Activated CD4-positive, alpha-beta T cell treated with anti-CD3 and anti-CD28 coated beads, Interleukin-2, amount 10 ng/mL, durations not matched to agents 24 days and 14 days (primary cell): ENCODE measurements at regions of chr18 and their contacts with region 1.

Region 1: GRCh38 chr18:54224379-54225014 is at the start of gene MBD2:
- DNase-seq: peak; percentile 99
- H3K4me3 Mint-ChIP-seq: peak within 1 kb of the TSS; percentile 92
- H3K27ac Mint-ChIP-seq: peak within 1 kb of the TSS; percentile 98
- H3K4me1 Mint-ChIP-seq: peaks cover 34% of the 10 kb centered on the region
- H3K27me3 Mint-ChIP-seq: no peaks in the 10 kb centered on the region
- total RNA-seq, gene MBD2: 195 and 200 TPM in 2 replicates

Region 2: GRCh38 chr18:54163453-54163852 is 61.0 kb before region 1 on chr18:
- intact Hi-C with region 1: loop called (anchors 1 kb)
- DNase-seq: peak; percentile 49
- H3K4me3 Mint-ChIP-seq: no peak overlapping the region
- H3K27ac Mint-ChIP-seq: peak overlapping the region; percentile 86
- H3K4me1 Mint-ChIP-seq: peaks cover 22% of the 10 kb centered on the region
- H3K27me3 Mint-ChIP-seq: no peaks in the 10 kb centered on the region

Region 3: DNA sequence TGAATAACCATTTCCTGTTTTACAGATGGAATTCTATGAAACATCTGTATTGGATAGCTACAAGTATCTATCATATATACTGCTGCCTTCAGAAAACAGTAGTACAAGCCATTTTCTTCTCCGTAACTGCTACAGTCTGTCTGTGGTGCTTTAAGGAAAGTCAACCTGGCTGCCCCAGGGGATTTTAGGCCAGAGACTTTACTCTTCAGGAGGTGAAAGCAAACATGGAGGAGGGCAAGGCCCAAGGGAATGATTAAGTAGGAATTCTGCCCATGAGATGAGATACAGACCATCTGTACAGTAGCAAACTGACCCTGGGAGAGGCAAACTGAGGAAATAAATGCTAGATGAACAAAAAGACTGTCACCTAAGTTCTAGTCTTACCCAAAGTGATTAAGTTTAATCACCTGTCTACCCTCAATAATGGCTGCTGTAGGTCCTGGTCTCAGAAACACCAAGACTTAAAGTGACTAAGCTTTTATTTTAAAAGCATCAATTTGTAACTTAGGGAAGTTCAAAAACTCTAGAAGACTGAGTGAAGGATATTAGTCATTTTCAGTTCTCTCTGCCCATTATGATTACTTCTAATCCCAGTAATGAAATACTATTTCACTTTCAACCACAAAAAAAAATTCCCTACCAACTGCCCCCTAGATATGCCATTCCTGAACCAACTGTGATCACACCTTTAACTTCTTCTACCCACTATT is 14.9 kb before region 1 on chr18:
- intact Hi-C with region 1: loop called (anchors 1 kb)
- DNase-seq: no peak
- H3K4me3 Mint-ChIP-seq: peak overlapping the region; percentile 49
- H3K27ac Mint-ChIP-seq: peak overlapping the region; percentile 79
- H3K4me1 Mint-ChIP-seq: peaks cover 50% of the 10 kb centered on the region
- H3K27me3 Mint-ChIP-seq: no peaks in the 10 kb centered on the region

Region 4: DNA sequence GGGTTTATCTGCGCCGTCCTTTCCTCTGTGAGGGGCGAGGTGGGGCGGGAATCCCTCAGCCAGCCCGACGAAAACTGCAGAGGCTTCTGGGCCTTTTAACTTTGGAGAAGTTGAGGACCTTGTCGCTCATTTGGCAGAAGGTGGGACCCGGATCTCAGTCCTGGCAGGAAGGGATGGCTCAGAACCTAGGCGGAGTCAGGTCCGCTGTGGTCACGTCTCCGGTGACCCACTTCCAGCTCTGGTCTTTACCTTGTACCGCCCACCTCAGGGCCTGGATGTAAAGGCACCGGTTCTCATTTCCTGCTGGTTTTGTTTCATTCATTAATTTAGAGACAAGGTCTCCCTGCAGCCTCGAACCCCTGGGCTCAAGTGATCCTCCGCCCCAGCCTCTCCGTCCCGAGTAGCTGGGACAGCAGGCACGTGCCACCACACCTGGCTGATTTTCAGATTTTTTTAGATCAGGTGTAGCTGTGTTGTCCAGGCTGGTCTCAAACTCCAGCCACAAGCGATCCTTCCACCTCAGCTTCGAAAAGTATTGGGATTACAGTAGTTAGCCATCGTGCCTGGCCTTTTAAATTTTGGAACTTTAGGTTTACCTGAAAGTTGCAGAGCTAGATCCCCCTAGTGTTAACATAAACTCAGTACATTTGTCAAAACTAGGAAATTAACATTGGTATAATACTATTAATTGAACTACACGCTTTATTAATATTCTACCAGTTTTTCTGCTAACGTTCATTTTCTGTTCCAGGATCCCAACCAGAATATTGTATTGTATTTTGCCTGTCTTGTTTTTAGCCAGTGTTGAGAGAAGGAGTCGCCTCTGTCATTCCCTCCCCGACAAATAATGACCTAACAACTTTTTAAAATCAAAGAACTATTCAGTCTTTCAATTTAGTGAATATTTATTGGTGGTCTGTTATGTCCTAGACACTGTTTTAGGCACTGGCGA is 45.7 kb after region 1 on chr18:
- intact Hi-C with region 1: loop called (anchors 1 kb)
- DNase-seq: peak; percentile 89
- H3K4me3 Mint-ChIP-seq: peak overlapping the region; percentile 85
- H3K27ac Mint-ChIP-seq: peak overlapping the region; percentile 95
- H3K4me1 Mint-ChIP-seq: peaks cover 40% of the 10 kb centered on the region
- H3K27me3 Mint-ChIP-seq: peaks cover 2% of the 10 kb centered on the region

Region 5: GRCh38 chr18:54357660-54358494 is 133.4 kb after region 1 on chr18 and contains the starts of genes C18orf54 and STARD6:
- intact Hi-C with region 1: loop called (anchors 1 kb)
- DNase-seq: peak; percentile 98
- H3K4me3 Mint-ChIP-seq: peak within 1 kb of the TSS; percentile 99
- H3K27ac Mint-ChIP-seq: peak within 1 kb of the TSS; percentile 100
- H3K4me1 Mint-ChIP-seq: peaks cover 25% of the 10 kb centered on the region
- H3K27me3 Mint-ChIP-seq: no peaks in the 10 kb centered on the region
- total RNA-seq, gene C18orf54: 10.9 and 12.8 TPM in 2 replicates
- total RNA-seq, gene STARD6: not detected in 2 replicates

Region 6: GRCh38 chr18:54946149-54946581 is 721.7 kb after region 1 on chr18:
- intact Hi-C with region 1: loop called (anchors 10 kb)
- DNase-seq: peak; percentile 76
- H3K4me3 Mint-ChIP-seq: peak overlapping the region; percentile 79
- H3K27ac Mint-ChIP-seq: peak overlapping the region; percentile 46
- H3K4me1 Mint-ChIP-seq: peaks cover 13% of the 10 kb centered on the region
- H3K27me3 Mint-ChIP-seq: peaks cover 11% of the 10 kb centered on the region